Psoas muscle (tissue), 8 donors: ENCODE measurements at regions of chr15 and their contacts with region 1.

Region 1: DNA sequence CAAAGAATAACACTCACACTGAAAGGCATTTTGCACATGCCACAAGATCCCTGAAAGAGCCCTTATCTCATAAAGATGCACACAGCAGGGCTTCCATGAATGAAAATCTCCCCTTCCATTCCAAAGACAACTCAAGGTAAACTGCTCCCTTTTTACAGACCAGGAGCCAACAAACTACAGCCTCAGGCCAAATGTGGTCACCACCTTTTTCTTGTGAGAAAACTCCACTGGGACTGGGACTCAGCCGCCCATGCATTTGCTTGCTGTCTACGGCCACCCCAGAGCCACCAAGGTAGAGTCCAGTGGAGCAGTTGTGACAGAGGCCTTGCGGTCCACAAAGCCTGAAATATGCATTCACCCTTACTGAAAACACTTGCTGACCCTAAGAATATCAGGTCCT is 334.8 kb downstream of the OCA2 start:
- DNase-seq: no peak
- ATAC-seq: no peak
- H3K4me3 ChIP-seq: no peak overlapping the region
- H3K27ac ChIP-seq: no peak overlapping the region
- H3K4me1 ChIP-seq: no peaks in the 10 kb centered on the region
- H3K27me3 ChIP-seq: no peaks in the 10 kb centered on the region
- CTCF ChIP-seq: no peak

Region 2: DNA sequence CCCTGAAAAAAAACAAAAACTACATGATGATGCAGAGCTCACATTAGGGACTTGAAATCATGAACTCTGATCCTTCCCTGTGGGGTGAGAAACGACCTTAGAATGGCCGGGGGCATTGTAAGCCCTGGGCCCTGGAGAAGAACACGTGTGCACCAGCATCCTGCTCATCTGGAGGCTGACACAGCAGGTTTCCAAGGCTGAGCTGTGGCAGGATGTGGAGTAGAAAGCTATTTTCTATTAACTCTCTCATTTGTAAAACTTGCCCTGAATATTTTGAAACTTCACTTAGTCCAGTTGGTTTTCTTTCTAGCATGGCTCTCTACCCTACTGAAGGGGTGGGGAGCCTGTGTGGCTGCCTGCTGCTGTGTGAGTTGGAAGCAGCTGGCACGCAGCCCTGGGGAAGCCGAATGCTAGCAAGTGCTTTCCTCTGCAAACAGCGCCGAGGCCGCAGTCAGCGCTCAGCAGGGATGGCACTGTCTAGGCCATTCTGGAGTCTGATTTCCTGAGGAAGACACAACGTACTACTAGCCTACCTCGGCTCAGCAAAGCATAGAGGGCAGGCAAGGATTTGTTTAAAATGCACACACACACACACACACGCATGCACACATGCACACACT is 735.4 kb before region 1 on chr15:
- intact Hi-C with region 1: no loop called
- DNase-seq: no peak
- ATAC-seq: no peak
- H3K4me3 ChIP-seq: no peak overlapping the region
- H3K27ac ChIP-seq: no peak overlapping the region
- H3K4me1 ChIP-seq: no peaks in the 10 kb centered on the region
- H3K27me3 ChIP-seq: no peaks in the 10 kb centered on the region
- CTCF ChIP-seq: no peak

Region 3: DNA sequence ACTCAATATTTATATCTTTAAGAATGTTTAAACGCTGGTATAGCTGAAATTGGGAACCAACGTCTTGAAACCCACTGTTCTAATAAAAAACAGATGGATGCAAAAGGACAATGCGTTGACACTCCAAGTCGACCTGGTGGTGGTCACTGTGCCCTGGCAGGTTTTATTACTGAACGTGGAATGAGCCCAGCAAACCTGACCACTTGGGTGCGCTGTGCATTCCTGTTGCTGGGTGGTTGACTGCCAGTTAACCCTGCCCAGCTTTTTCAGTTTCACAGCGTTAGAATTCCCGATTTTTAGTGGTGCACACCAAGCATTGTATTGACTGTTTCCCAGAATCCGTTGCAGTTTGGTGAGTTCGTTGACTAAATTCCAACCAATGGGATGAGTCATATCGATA is 49.7 kb before region 1 on chr15:
- intact Hi-C with region 1: no loop called
- DNase-seq: no peak
- ATAC-seq: no peak
- H3K4me3 ChIP-seq: no peak overlapping the region
- H3K27ac ChIP-seq: no peak overlapping the region
- H3K4me1 ChIP-seq: no peaks in the 10 kb centered on the region
- H3K27me3 ChIP-seq: no peaks in the 10 kb centered on the region
- CTCF ChIP-seq: no peak

Region 4: GRCh38 chr15:27977696-27978095 is 213.4 kb after region 1 on chr15:
- intact Hi-C with region 1: no loop called
- DNase-seq: no peak
- ATAC-seq: no peak
- H3K4me3 ChIP-seq: no peak overlapping the region
- H3K27ac ChIP-seq: no peak overlapping the region
- H3K4me1 ChIP-seq: no peaks in the 10 kb centered on the region
- H3K27me3 ChIP-seq: no peaks in the 10 kb centered on the region
- CTCF ChIP-seq: no peak

Region 5: DNA sequence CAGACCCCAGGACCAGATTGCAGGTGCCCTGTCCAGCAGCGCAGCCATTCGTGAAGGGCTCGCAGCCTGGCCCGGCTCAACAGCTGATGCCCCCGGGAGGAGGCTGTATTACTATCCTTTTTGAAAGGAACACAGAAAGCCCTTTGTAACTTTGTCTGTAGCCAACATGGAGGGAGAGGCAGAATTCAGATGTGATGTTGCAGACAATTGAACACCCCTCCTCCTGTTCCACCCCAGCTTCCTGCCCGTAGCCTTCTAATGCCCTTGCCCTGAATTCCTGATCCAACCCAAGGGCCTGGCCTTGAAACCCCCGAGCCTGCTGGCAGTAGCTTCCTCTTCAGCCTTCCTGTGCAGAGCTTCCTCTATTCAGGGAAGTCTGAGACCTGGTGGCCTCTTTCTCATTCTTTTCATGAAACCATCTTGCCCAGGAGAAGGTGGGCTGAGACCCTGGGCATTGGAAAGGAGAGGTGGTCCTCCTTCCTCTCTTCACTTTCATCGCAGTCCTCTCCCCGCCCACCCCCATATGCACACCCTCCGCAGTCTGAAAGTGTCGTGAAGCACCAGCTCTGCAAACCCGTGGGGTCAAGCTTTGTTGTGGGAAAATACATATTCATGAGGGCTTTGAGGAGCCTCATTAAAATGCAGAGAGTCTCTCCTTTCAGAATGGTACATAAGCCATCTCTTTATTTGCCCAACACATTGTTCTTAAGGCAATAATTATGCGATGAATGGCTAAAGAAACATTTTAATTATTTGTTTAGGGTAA is 1230.7 kb after region 1 on chr15:
- intact Hi-C with region 1: loop called in 1 of 2 experiments (anchors 5 kb)
- DNase-seq: no peak
- ATAC-seq: no peak
- H3K4me3 ChIP-seq: no peak overlapping the region
- H3K27ac ChIP-seq: no peak overlapping the region
- H3K4me1 ChIP-seq: no peaks in the 10 kb centered on the region
- H3K27me3 ChIP-seq: no peaks in the 10 kb centered on the region
- CTCF ChIP-seq: no peak